ENCODE measurements at regions of chr10 and their contacts with region 1.

Region 1: DNA sequence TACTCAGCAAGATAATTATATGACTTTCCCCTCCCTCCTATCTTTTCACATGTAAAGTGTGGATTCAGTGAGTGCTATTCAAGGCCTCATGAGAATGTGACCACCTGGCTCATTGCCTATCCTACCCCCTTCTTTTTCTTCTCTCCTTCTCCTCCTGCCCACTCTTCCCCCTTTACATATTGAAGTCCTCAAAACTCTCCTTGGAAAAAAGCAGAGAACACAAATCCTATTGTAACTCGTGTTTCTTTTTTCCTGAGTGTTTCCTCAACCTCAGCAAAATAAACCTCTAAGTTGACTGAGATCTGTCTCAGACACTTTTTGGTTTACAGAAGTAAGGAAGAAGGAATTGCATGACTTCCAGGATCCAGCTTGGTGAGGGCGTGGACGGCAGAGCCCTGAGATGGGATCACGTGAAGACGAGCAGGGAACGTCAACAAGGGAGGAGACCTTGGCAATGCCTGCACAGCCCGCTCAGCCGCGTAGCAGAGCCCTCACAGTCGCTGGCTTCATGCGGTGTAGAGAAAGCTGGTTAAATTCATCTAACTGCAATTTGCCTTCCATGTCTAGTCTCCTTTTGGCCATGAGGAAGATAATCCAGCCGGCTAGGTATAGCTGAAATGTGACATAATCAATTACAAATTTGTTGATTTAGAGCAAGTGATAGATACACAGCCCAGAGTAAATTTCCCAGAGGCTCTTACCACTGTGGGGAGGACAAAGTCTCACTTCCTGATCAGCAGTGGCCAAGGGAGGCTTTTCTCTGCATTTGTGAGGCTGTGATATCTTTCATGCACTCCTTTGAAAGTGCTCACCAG is 75.7 kb downstream of the LYZL2 start:
- DNase-seq: peak; percentile 87
- H3K4me3 ChIP-seq: peak overlapping the region; percentile 14
- H3K27ac ChIP-seq: peak overlapping the region; percentile 80
- H3K4me1 ChIP-seq: no peaks in the 10 kb centered on the region
- H3K27me3 ChIP-seq: no peaks in the 10 kb centered on the region
- CTCF ChIP-seq: no peak

Region 2: GRCh38 chr10:30583778-30584415 is 30.1 kb after region 1 on chr10:
- intact Hi-C with region 1: loop called (anchors 5 kb)
- DNase-seq: peak; percentile 86
- H3K4me3 ChIP-seq: peak overlapping the region; percentile 20
- H3K27ac ChIP-seq: peak overlapping the region; percentile 87
- H3K4me1 ChIP-seq: peaks cover 11% of the 10 kb centered on the region
- H3K27me3 ChIP-seq: no peaks in the 10 kb centered on the region
- CTCF ChIP-seq: no peak

Measured in colonic mucosa (tissue), 4 donors.